ENCODE measurements at regions of chr4 and their contacts with region 1.

Region 1: DNA sequence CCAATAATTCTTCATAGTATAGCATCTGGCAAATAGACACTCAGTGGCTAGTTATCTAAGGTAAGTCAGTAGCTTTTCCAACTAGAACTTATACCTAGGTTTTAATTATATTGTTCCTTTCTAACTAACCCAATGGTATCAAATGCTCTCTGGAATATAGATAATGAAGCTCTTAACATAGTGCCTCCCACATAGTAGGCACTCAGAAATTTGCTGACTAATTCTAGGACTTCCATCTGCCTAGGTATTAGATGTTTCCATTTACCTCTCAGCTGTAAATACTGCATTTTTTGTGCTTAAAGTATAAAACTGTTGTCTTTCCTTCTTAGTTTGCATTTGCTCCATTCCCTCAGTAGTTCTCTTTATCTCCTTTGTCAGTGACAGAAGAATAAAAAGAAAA is 214.3 kb upstream of the SPRY1 start:
- DNase-seq: no peak
- ATAC-seq: no peak
- H3K4me3 ChIP-seq: no peak overlapping the region
- H3K27ac ChIP-seq: no peak overlapping the region
- H3K4me1 ChIP-seq: no peaks in the 10 kb centered on the region
- H3K27me3 ChIP-seq: no peaks in the 10 kb centered on the region
- CTCF ChIP-seq: no peak

Region 2: GRCh38 chr4:122577808-122578781 is 604.2 kb before region 1 on chr4:
- CTCF ChIA-PET with region 1: no interaction called
- POLR2A ChIA-PET with region 1: no interaction called
- in situ Hi-C with region 1: no loop called
- intact Hi-C with region 1: no loop called
- DNase-seq: no peak
- ATAC-seq: peak; percentile 75; the same call in 1 of the 2 replicates
- H3K4me3 ChIP-seq: no peak overlapping the region
- H3K27ac ChIP-seq: no peak overlapping the region
- H3K4me1 ChIP-seq: no peaks in the 10 kb centered on the region
- H3K27me3 ChIP-seq: no peaks in the 10 kb centered on the region
- CTCF ChIP-seq: peak; percentile 64; the same call in 1 of the 2 replicates

Region 3: DNA sequence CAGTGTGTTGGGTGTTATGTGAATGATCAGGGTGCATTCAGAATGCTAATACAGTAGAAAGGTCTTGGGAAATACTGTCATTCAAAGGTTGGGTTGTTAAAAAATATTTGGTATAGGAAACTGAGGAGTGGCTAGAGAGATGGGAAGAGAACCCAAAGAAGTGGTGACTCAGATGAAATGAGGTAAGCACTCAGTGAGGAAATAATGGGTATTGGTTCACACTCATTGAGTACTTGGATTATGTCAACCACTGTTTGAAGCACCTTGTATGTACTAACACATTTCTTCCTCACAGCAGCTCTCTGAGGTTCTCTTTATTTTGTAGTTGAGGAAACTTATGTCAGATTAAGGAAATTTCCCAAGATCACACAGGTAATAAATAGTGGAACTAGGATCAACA is 219.1 kb before region 1 on chr4:
- CTCF ChIA-PET with region 1: no interaction called
- POLR2A ChIA-PET with region 1: no interaction called
- in situ Hi-C with region 1: no loop called
- intact Hi-C with region 1: no loop called
- DNase-seq: no peak
- ATAC-seq: no peak
- H3K4me3 ChIP-seq: no peak overlapping the region
- H3K27ac ChIP-seq: no peak overlapping the region
- H3K4me1 ChIP-seq: peaks cover 1% of the 10 kb centered on the region; the same call in 1 of the 2 replicates
- H3K27me3 ChIP-seq: no peaks in the 10 kb centered on the region
- CTCF ChIP-seq: no peak

Region 4: GRCh38 chr4:123037804-123038203 is 144.5 kb before region 1 on chr4:
- CTCF ChIA-PET with region 1: no interaction called
- POLR2A ChIA-PET with region 1: no interaction called
- in situ Hi-C with region 1: no loop called
- intact Hi-C with region 1: no loop called
- DNase-seq: no peak
- ATAC-seq: no peak
- H3K4me3 ChIP-seq: no peak overlapping the region
- H3K27ac ChIP-seq: no peak overlapping the region
- H3K4me1 ChIP-seq: no peaks in the 10 kb centered on the region
- H3K27me3 ChIP-seq: no peaks in the 10 kb centered on the region
- CTCF ChIP-seq: no peak

Region 5: DNA sequence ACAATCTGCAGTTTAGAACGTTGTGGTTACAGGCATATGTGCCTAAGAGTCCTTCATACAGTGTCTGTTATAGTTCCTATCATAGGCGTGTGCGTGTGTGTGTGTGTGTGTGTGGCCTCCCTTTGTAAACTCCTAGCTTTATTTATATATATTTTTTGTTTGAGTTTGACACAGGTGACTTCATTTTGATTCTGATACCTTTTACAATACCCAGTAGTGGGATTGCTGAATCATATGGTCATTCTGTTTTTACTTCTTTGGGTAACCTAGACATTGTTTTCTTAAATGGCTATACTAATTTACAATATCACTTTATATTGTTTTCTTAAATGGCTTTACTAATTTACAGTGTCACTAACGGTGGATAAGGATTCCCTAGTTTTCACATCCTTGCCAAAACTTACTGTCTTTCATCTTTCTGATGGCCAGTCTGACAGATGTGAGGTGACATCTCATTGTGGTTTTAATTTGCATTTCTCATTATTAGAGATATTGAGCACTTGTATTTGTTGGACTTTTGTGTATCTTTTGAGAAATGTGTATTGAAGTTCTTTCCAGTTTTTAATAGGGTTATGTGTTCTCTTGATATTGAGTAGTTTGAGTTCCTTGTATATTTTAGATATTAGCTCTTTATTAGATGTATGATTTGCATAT is 48.8 kb before region 1 on chr4:
- CTCF ChIA-PET with region 1: no interaction called
- POLR2A ChIA-PET with region 1: no interaction called
- in situ Hi-C with region 1: no loop called
- intact Hi-C with region 1: loop called (anchors 1 kb)
- DNase-seq: no peak
- ATAC-seq: no peak
- H3K4me3 ChIP-seq: no peak overlapping the region
- H3K27ac ChIP-seq: no peak overlapping the region
- H3K4me1 ChIP-seq: no peaks in the 10 kb centered on the region
- H3K27me3 ChIP-seq: no peaks in the 10 kb centered on the region
- CTCF ChIP-seq: no peak